CD4-positive, alpha-beta T cell (primary cell): ENCODE measurements at regions of chr7 and their contacts with region 1.

Region 1: GRCh38 chr7:115779561-115779960 is 251.0 kb downstream of the TFEC start:
- DNase-seq: no peak
- ATAC-seq: no peak
- H3K4me3 ChIP-seq: no peak overlapping the region
- H3K4me3 Mint-ChIP-seq: no peak overlapping the region
- H3K27ac ChIP-seq: no peak overlapping the region
- H3K27ac Mint-ChIP-seq: no peak overlapping the region
- H3K4me1 ChIP-seq: no peaks in the 10 kb centered on the region
- H3K4me1 Mint-ChIP-seq: no peaks in the 10 kb centered on the region
- H3K27me3 ChIP-seq: no peaks in the 10 kb centered on the region
- H3K27me3 Mint-ChIP-seq: no peaks in the 10 kb centered on the region
- CTCF ChIP-seq: no peak

Region 2: DNA sequence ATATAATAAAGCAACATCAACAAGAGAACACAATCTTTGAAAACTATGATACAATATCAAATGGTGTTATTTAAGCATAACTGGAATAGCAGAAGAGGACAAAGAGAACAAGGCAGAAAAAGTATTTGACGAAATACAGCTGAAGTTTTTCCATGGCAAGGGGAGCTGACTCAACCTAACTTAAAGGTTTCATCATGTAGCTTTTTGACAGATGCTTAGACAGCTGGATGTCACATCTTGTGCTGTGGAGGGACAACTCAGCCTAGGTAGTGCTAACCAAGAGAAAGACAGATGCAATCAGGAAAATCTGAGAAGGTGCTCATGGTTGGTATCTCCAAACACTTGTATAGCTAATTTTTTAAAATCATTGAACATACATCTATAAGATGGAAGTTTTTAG is 42.8 kb after region 1 on chr7:
- CTCF ChIA-PET with region 1: no interaction called
- POLR2A ChIA-PET with region 1: no interaction called
- intact Hi-C with region 1: loop called in 1 of 2 experiments (anchors 5 kb)
- DNase-seq: no peak
- ATAC-seq: no peak
- H3K4me3 ChIP-seq: no peak overlapping the region
- H3K4me3 Mint-ChIP-seq: no peak overlapping the region
- H3K27ac ChIP-seq: no peak overlapping the region
- H3K27ac Mint-ChIP-seq: no peak overlapping the region
- H3K4me1 ChIP-seq: no peaks in the 10 kb centered on the region
- H3K4me1 Mint-ChIP-seq: no peaks in the 10 kb centered on the region
- H3K27me3 ChIP-seq: no peaks in the 10 kb centered on the region
- H3K27me3 Mint-ChIP-seq: no peaks in the 10 kb centered on the region
- CTCF ChIP-seq: no peak

Region 3: GRCh38 chr7:115844857-115845256 is 65.3 kb after region 1 on chr7:
- CTCF ChIA-PET with region 1: no interaction called
- POLR2A ChIA-PET with region 1: no interaction called
- intact Hi-C with region 1: no loop called
- DNase-seq: no peak
- ATAC-seq: no peak
- H3K4me3 ChIP-seq: no peak overlapping the region
- H3K4me3 Mint-ChIP-seq: no peak overlapping the region
- H3K27ac ChIP-seq: no peak overlapping the region
- H3K27ac Mint-ChIP-seq: no peak overlapping the region
- H3K4me1 ChIP-seq: no peaks in the 10 kb centered on the region
- H3K4me1 Mint-ChIP-seq: no peaks in the 10 kb centered on the region
- H3K27me3 ChIP-seq: no peaks in the 10 kb centered on the region
- H3K27me3 Mint-ChIP-seq: no peaks in the 10 kb centered on the region
- CTCF ChIP-seq: no peak

Region 4: GRCh38 chr7:116041615-116042014 is 262.1 kb after region 1 on chr7:
- CTCF ChIA-PET with region 1: no interaction called
- POLR2A ChIA-PET with region 1: no interaction called
- intact Hi-C with region 1: no loop called
- DNase-seq: no peak
- ATAC-seq: no peak
- H3K4me3 ChIP-seq: no peak overlapping the region
- H3K4me3 Mint-ChIP-seq: no peak overlapping the region
- H3K27ac ChIP-seq: no peak overlapping the region
- H3K27ac Mint-ChIP-seq: no peak overlapping the region
- H3K4me1 ChIP-seq: no peaks in the 10 kb centered on the region
- H3K4me1 Mint-ChIP-seq: no peaks in the 10 kb centered on the region
- H3K27me3 ChIP-seq: no peaks in the 10 kb centered on the region
- H3K27me3 Mint-ChIP-seq: no peaks in the 10 kb centered on the region
- CTCF ChIP-seq: no peak